ENCODE measurements at regions of chr2 and their contacts with region 1.

Region 1: DNA sequence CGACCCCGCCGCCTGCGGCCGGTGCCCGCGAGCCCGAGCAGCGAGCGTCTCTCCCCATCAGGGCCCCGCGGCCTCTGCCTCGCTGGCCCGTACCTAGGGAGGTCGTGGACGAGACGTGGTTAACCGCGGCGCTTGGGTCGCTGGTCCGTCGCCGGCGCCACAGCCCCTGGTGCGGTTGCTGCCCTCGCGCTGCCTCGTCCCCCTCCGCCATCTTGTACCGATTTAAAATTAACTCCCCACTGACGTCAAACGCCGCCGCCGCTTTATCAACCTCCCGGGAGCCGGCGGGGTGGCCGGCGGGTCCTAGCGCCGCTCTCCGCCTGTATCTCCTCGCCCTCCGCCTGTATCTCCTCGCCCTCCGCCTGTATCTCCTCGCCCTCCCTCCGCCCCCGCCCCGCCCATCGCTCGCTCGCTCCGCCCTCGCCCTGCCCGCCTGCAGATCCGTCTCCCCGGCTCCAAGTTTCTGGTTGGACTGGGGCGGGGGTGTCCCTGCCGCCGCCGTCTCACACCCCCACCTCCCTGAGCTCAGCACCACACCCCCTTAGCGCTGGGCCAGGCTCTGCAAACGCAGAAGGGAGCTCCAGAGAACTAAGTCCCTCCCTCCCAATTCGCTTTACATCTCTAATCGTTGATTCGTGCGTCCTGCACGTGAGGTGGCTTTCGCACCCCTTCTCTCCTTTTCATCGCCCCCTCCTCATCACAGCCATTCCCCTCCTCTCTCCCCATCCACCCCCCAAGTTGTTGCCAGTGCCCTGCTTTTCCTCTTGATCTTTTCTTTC is at the start of gene ATL2:
- DNase-seq: peak; percentile 97
- H3K4me3 ChIP-seq: peak within 1 kb of the TSS; percentile 87 to 99
- H3K27ac ChIP-seq: peak within 1 kb of the TSS; percentile 95 to 99
- H3K4me1 ChIP-seq: no peaks in the 10 kb centered on the region
- H3K27me3 ChIP-seq: no peaks in the 10 kb centered on the region
- CTCF ChIP-seq: no peak
- POLR2A ChIP-seq: peak; percentile 97
- total RNA-seq, gene ATL2: 70.9 to 88.7 TPM

Region 2: GRCh38 chr2:38327580-38327979 is 49.7 kb before region 1 on chr2:
- intact Hi-C with region 1: loop called (anchors 5 kb)
- DNase-seq: no peak
- H3K4me3 ChIP-seq: no peak overlapping the region
- H3K27ac ChIP-seq: no peak overlapping the region
- H3K4me1 ChIP-seq: no peaks in the 10 kb centered on the region
- H3K27me3 ChIP-seq: no peaks in the 10 kb centered on the region
- CTCF ChIP-seq: no peak
- POLR2A ChIP-seq: no peak

Region 3: DNA sequence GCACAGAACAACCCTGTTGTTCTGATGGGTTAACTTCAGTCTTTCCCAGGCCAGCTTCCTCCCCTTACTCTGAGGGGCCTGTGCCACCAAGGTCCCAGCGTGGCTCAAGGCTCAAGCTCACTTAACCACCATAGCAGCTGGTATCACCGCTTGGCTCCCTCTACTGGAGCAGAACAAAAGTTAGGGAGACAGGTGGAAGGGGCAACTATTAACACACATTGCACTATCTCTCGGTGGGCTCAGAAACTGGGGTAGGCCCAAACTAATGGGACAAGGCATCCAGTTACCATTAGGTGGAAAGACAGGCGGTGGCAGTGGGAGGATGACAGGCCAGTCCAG is 88.5 kb after region 1 on chr2:
- intact Hi-C with region 1: loop called (anchors 2 kb)
- DNase-seq: no peak
- H3K4me3 ChIP-seq: no peak overlapping the region
- H3K27ac ChIP-seq: peak overlapping the region; percentile 68 to 69
- H3K4me1 ChIP-seq: no peaks in the 10 kb centered on the region
- H3K27me3 ChIP-seq: no peaks in the 10 kb centered on the region
- CTCF ChIP-seq: peak in 2 of 4 experiments; percentile 35 to 47
- POLR2A ChIP-seq: no peak

Region 4: GRCh38 chr2:38508311-38509039 is 131.2 kb after region 1 on chr2:
- intact Hi-C with region 1: loop called (anchors 10 kb)
- DNase-seq: peak; percentile 79
- H3K4me3 ChIP-seq: no peak overlapping the region
- H3K27ac ChIP-seq: peak overlapping the region; percentile 39 to 70
- H3K4me1 ChIP-seq: no peaks in the 10 kb centered on the region
- H3K27me3 ChIP-seq: no peaks in the 10 kb centered on the region
- CTCF ChIP-seq: peak in 3 of 4 experiments; percentile 33 to 45 (median 33)
- POLR2A ChIP-seq: no peak

Measured in prostate gland (tissue), 2 donors.